OCI-LY7 (cell line): ENCODE measurements at regions of chr5 and their contacts with region 1.

Region 1: DNA sequence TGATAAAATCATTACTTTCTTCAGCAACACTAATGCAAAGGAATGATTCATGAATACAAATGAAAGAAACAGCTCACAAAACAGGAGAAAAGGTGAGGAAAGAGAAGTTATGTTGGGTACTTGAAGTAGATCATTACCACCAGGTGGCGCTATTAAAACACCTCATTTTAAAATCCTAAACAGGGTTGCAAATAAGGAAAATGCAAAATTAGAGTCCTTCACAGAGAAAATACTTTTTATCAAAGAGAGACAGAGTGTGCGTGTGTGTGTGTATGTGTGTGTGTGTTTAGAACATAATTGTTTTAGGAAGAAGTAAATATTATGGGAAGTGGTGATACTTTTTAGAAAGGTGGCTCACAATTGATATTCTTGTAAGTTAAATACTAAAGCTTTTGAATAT is 49.5 kb upstream of the CD180 start:
- DNase-seq: peak; percentile 77
- H3K4me3 ChIP-seq: no peak overlapping the region
- H3K27ac ChIP-seq: no peak overlapping the region
- H3K4me1 ChIP-seq: no peaks in the 10 kb centered on the region
- CTCF ChIP-seq: peak; percentile 98

Region 2: GRCh38 chr5:67111779-67112178 is 134.3 kb before region 1 on chr5:
- CTCF ChIA-PET with region 1: no interaction called
- POLR2A ChIA-PET with region 1: no interaction called
- intact Hi-C with region 1: no loop called
- DNase-seq: no peak
- H3K4me3 ChIP-seq: no peak overlapping the region
- H3K27ac ChIP-seq: no peak overlapping the region
- H3K4me1 ChIP-seq: no peaks in the 10 kb centered on the region
- CTCF ChIP-seq: no peak

Region 3: DNA sequence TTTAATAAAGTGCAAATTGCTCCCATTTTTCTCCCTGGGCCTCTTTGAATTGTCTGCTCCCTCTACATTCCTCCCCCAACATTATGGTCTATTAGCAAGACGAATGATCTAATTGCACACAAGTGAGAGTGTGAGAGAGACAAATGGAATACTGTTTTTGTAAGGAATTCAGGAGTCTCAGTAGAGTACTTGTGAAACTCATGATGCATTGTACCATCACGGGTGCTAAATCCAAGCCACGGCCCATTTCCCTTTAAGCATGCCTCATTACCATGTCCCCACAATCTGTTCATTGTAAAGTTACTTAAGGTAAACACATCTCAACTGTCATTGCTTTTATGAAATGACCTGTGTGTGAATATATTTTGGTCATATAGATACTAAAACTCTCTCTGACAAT is 112.3 kb before region 1 on chr5:
- CTCF ChIA-PET with region 1: no interaction called
- POLR2A ChIA-PET with region 1: no interaction called
- intact Hi-C with region 1: no loop called
- DNase-seq: no peak
- H3K4me3 ChIP-seq: no peak overlapping the region
- H3K27ac ChIP-seq: no peak overlapping the region
- H3K4me1 ChIP-seq: no peaks in the 10 kb centered on the region
- CTCF ChIP-seq: no peak

Region 4: DNA sequence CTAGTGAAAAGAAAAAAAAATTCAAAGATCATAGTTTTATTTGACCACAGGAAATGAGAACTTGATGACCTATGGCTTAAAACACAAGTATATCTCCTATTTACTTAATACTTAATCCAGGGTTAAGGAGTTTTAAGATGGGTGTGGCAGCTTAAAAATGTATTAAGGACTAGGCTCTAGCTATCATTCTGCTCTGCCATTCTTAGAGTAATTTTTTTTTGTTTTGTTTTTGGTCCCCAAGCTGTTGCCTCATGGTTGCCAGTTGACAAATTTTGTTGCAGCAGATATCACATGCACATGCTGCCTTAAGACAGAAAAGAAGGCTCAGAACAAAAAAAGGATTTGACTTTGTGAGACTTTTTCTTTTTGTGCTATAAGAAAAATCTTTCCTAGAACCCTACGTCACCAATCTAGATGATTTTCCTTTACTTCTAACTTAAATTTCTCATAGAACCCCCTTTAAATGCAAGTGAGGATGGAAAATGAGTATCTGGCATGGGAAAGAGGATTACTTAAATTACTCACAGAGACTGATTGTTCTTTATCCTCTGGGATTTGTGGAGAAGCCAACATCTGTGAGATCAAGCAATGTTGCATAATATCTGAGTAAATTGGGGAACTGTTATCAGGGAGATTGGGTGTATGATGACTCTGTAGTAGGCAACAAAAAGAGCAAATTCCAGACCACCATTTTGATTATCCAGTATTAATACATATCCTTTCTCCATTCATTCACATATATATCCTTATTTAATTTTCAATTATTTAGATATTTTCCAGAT is 315.2 kb after region 1 on chr5:
- CTCF ChIA-PET with region 1: no interaction called
- POLR2A ChIA-PET with region 1: no interaction called
- intact Hi-C with region 1: no loop called
- DNase-seq: no peak
- H3K4me3 ChIP-seq: no peak overlapping the region
- H3K27ac ChIP-seq: no peak overlapping the region
- H3K4me1 ChIP-seq: no peaks in the 10 kb centered on the region
- CTCF ChIP-seq: no peak

Region 5: DNA sequence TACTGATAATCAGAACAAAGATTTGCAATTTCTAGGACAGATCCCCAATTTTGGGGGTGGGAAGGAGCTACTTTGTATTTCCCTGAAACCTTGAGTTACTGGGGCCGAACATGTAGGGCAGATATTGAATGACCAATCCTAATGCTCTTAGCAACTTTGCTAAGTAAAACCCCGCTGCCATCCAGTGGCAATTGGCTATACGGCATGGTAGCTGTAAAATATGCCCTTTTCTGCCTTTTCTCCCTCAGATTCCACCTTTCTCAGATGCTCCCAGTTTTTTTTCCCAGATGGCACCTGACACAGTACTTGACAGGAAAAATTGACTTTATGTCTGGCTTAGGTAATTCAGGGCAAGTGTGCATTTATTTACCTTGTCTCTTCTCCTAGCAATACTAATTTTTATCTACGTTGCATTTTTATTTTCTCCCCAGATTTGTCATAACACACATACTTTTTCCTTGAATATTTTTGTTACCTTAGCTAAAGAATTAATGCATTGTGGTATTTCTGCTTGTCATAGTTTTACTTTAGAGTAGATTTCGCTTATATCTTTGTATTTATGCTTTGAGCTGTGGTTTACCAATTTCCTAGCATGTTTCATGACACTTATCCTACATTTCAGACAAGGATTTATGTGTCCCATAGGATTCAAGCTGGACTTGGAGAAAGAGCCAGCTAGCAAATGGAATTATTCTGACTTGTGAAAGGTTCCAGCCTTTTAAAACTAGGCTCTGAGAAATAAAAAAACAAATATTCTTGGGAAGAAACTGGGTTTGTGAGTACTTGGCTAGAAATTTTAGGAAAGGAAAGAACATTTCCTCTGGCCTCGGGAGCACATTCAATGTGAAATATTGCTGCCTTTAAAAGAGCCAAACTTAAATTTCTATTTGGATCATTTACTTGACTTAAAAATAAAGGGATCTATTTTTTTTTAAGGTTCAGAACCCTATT is 1006.8 kb after region 1 on chr5:
- CTCF ChIA-PET with region 1: no interaction called
- POLR2A ChIA-PET with region 1: no interaction called
- intact Hi-C with region 1: loop called (anchors 5 kb)
- DNase-seq: peak; percentile 66
- H3K4me3 ChIP-seq: no peak overlapping the region
- H3K27ac ChIP-seq: no peak overlapping the region
- H3K4me1 ChIP-seq: no peaks in the 10 kb centered on the region
- CTCF ChIP-seq: peak; percentile 84

Region 6: GRCh38 chr5:68272289-68272688 is 1026.2 kb after region 1 on chr5:
- CTCF ChIA-PET with region 1: no interaction called
- POLR2A ChIA-PET with region 1: no interaction called
- intact Hi-C with region 1: loop called (anchors 5 kb)
- DNase-seq: peak; percentile 16
- H3K4me3 ChIP-seq: no peak overlapping the region
- H3K27ac ChIP-seq: no peak overlapping the region
- H3K4me1 ChIP-seq: no peaks in the 10 kb centered on the region
- CTCF ChIP-seq: peak; percentile 79